Mammary epithelial cell (primary cell): ENCODE measurements at regions of chr3 and their contacts with region 1.

Region 1: GRCh38 chr3:186694288-186695032 is 22.7 kb upstream of the KNG1 start:
- DNase-seq: peak; percentile 77
- H3K4me3 ChIP-seq: no peak overlapping the region
- H3K27ac ChIP-seq: no peak overlapping the region
- H3K4me1 ChIP-seq: peaks cover 39% of the 10 kb centered on the region
- H3K27me3 ChIP-seq: no peaks in the 10 kb centered on the region
- CTCF ChIP-seq: no peak

Region 2: DNA sequence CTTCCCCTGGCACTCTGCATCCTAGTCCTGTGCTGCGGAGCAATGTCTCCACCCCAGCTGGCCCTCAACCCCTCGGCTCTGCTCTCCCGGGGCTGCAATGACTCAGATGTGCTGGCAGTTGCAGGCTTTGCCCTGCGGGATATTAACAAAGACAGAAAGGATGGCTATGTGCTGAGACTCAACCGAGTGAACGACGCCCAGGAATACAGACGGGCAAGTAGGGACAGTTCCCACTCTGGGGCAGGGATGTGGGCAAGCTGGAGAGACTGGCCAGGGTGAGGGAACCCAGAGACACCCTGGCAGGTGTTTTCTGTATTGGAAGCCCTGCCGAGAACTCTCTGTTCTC is 54.0 kb before region 1 on chr3:
- CTCF ChIA-PET with region 1: no interaction called
- dilution Hi-C with region 1: no loop called
- in situ Hi-C with region 1: no loop called
- intact Hi-C with region 1: loop called (anchors 5 kb)
- DNase-seq: peak; percentile 98
- H3K4me3 ChIP-seq: no peak overlapping the region
- H3K27ac ChIP-seq: peak overlapping the region; percentile 53
- H3K4me1 ChIP-seq: peaks cover 65% of the 10 kb centered on the region
- H3K27me3 ChIP-seq: no peaks in the 10 kb centered on the region
- CTCF ChIP-seq: no peak

Region 3: DNA sequence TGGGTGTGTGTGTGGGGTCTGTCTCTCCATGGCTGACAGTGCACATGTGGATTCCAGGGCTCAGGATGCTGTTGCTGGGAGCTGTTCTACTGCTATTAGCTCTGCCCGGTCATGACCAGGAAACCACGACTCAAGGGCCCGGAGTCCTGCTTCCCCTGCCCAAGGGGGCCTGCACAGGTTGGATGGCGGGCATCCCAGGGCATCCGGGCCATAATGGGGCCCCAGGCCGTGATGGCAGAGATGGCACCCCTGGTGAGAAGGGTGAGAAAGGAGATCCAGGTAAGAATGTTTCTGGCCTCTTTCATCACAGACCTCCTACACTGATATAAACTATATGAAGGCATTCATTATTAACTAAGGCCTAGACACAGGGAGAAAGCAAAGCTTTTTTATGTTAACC is 158.5 kb after region 1 on chr3:
- CTCF ChIA-PET with region 1: no interaction called
- dilution Hi-C with region 1: no loop called
- in situ Hi-C with region 1: no loop called
- intact Hi-C with region 1: no loop called
- DNase-seq: no peak
- H3K4me3 ChIP-seq: no peak overlapping the region
- H3K27ac ChIP-seq: no peak overlapping the region
- H3K4me1 ChIP-seq: no peaks in the 10 kb centered on the region
- H3K27me3 ChIP-seq: no peaks in the 10 kb centered on the region
- CTCF ChIP-seq: no peak